Right ventricle myocardium inferior (tissue), 1 donor: ENCODE measurements at regions of chr20 and their contacts with region 1.

Region 1: DNA sequence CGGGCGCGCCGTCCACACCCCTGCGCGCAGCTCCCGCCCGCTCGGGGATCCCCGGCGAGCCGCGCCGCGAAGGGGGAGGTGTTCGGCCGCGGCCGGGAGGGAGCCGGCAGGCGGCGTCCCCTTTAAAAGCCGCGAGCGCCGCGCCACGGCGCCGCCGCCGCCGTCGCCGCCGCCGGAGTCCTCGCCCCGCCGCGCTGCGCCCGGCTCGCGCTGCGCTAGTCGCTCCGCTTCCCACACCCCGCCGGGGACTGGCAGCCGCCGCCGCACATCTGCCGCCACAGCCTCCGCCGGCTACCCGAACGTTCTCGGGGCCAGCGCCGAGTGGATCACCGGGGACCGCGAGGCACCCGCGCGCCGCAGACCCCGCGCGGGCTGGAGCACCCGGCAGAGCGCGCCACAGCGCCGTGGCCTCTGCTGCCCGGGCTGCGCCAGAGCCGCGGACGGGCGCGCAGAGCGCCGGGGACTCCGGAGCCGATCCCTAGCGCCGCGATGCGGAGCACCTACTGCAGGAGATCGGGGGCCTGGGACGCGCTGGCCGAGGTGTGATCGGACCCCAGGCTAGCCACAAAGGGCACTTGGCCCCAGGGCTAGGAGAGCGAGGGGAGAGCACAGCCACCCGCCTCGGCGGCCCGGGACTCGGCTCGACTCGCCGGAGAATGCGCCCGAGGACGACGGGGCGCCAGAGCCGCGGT is at the start of gene BMP2:
- DNase-seq: peak; percentile 77
- ATAC-seq: peak; percentile 90
- total RNA-seq, gene BMP2: 2.3 TPM

Region 2: DNA sequence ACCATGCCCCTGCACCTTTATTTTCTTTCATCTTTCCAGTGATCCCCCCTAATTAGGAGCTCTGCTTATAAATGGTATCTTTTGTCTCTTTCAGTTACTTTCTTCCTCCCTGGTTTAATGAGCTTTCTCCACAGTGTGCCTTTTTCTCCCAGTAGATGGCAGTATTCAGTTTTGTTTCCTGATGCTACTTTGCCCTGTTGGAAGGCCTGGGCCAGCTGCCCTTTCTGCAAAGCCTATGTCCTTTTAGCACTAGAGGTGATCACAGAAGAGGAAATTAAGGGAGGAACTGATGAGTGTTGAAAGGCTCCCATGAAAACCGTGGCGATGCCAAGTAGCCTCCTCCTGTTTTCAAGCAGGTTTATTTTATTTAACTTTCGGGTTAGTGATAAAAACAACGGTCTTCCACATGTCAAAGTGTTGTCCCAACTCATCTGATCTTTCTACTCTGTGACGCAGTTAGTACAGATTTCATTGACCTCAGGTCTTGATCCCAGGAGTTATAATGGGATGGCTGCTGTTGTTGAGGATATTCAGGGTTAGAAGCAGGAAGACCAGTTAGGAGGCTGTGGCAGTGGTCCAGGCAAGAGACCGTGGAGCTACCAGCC is 184.4 kb before region 1 on chr20:
- intact Hi-C with region 1: loop called (anchors 5 kb)
- DNase-seq: peak; percentile 62
- ATAC-seq: peak; percentile 65

Region 3: GRCh38 chr20:6636209-6637159 is 131.2 kb before region 1 on chr20:
- intact Hi-C with region 1: loop called (anchors 2 kb)
- DNase-seq: no peak
- ATAC-seq: peak; percentile 85

Region 4: DNA sequence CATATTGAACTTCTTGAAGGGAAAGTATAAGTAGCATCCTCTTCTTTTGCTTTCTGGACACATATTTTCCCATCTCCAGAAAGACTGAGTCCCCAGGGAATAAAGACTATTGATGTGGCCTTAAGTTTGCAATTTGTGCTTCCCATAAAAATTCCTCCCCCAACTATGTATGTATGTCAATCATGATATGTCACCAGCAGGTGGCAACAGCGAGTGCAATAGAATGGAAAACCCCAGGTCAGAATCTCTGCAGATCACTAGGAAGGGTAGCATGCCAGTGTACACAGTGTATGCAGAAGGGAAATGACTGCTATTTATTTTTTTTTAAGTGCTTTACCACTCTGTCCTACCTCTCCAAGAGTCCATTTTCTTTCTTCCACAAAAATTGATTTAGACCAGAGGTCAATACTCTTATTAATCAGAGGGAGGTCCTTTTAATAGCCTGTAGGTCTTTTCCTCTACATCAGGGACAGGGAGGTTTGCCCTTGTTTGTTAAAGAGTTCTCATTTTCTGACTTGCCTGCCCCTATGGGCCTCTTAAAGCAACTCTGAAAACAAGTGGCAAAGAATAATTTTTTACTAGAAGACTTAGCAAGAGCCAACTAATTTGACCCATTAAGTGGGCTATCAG is 61.2 kb after region 1 on chr20:
- intact Hi-C with region 1: loop called (anchors 10 kb)
- DNase-seq: no peak
- ATAC-seq: peak; percentile 64

Region 5: GRCh38 chr20:8213831-8214587 is 1446.3 kb after region 1 on chr20:
- intact Hi-C with region 1: no loop called
- DNase-seq: no peak
- ATAC-seq: no peak